ENCODE measurements at regions of chr10 and their contacts with region 1.

Region 1: DNA sequence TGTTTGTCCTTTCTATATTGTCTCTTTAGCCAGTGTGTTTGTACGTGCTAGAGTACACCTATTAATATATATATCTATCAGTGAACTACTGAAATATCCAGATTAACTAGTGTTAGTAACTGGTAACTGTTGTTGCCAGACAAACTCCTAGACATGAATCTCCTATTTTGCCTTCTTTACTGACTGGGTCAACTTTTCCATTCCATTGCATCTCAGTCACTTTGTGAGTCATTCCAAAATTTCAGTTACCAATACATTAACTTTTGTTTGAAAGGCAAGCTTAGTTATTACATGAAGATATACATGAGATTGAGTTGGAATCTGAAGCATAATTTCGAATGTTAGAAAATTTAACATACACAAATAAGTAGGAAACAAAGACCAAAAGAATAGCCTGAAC is 51.4 kb downstream of the BTAF1 start:
- DNase-seq: no peak
- H3K4me3 Mint-ChIP-seq: no peak overlapping the region
- H3K27ac Mint-ChIP-seq: peak overlapping the region; percentile 73
- H3K4me1 Mint-ChIP-seq: peaks cover 37% of the 10 kb centered on the region
- H3K27me3 Mint-ChIP-seq: no peaks in the 10 kb centered on the region

Region 2: DNA sequence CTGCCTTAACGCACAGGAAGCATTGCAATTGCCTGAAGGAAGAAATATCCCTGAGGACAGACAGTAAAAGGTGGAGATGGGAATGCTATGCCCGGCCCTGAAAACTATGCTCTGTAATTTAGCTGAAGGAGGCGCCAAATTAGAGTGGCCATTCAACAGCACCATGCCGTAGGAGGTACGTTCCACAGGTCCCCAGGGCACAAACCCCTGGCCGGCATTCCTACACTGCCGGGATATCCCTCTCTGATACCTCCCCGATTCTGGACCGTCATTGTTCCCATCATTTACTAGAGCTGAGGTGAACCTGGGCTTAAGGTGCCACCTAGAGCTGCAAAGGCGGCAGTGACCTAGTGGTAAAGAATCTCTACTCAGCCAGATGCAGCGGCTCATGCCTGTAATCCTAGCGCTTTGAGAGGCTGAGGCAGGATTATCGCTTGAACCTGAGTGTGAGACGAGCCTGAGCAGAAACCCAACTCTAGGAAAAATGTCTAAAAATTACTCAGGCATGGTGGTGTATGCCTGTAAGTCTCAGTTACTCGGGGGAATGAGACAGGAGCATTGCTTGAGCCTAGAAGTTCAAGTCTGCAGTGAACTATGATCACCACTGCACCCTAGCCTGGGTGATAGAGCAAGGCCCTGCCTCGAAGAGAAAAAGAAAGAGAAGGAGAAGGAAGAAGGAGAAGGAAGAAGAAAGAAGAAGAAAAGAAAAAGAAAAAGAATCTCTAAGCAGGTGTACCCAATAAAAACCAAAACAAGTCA is 229.7 kb before region 1 on chr10:
- CTCF ChIA-PET with region 1: no interaction called
- intact Hi-C with region 1: no loop called
- DNase-seq: peak; percentile 7
- H3K4me3 Mint-ChIP-seq: no peak overlapping the region
- H3K27ac Mint-ChIP-seq: no peak overlapping the region
- H3K4me1 Mint-ChIP-seq: no peaks in the 10 kb centered on the region
- H3K27me3 Mint-ChIP-seq: peaks cover 26% of the 10 kb centered on the region

Region 3: DNA sequence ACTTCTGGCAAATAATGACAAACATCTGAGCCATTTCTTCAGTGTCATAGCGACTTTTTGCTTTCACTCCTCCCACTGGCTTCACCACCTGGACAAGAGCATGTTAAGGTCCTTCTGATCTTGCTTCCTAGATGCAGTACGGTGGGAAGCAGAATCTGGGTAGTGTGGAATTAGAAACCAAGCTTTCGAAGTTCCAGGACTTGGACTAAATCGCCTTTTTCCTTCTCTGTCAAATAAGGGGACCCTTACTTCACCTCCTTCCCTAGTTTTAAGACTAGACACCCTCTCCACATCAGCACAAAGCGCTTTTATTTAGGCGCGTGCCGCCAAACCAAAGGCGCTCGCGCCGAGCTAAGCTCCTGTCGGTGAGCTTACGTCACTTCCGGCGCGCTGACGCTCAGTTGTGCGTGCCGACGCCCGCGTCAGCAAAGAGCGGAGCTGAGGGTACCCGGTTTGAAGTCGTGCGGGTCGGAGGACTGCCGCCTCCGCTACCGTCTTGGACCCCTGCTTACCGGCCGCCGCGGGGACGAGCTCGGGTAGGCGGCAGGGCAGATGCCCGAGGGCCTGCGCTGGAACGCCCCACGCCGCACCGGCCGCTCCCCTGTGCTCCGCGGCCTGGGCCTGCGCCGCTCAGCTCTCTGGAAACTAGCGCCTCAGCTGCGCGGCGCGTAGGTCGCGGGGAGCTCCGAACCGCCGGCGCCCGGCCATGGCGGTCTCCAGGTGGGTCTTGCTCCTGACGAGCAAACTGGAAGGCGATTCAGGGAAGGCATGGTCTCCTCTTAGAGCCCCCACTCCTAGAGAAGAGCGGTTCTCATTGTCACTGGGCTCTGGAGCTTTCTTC is 51.4 kb before region 1 on chr10 and contains the start of gene BTAF1:
- CTCF ChIA-PET with region 1: no interaction called
- intact Hi-C with region 1: loop called (anchors 1 kb)
- DNase-seq: peak; percentile 93
- H3K4me3 Mint-ChIP-seq: peak within 1 kb of the TSS; percentile 86
- H3K27ac Mint-ChIP-seq: peak within 1 kb of the TSS; percentile 99
- H3K4me1 Mint-ChIP-seq: peaks cover 35% of the 10 kb centered on the region
- H3K27me3 Mint-ChIP-seq: no peaks in the 10 kb centered on the region
- total RNA-seq, gene BTAF1: 42.6 to 43.6 TPM

Region 4: GRCh38 chr10:91953600-91954160 is 21.3 kb before region 1 on chr10:
- CTCF ChIA-PET with region 1: no interaction called
- intact Hi-C with region 1: no loop called
- DNase-seq: no peak
- H3K4me3 Mint-ChIP-seq: no peak overlapping the region
- H3K27ac Mint-ChIP-seq: no peak overlapping the region
- H3K4me1 Mint-ChIP-seq: no peaks in the 10 kb centered on the region
- H3K27me3 Mint-ChIP-seq: no peaks in the 10 kb centered on the region

Region 5: GRCh38 chr10:92011560-92012214 is 36.7 kb after region 1 on chr10:
- CTCF ChIA-PET with region 1: no interaction called
- intact Hi-C with region 1: loop called (anchors 2 kb)
- DNase-seq: no peak
- H3K4me3 Mint-ChIP-seq: no peak overlapping the region
- H3K27ac Mint-ChIP-seq: no peak overlapping the region
- H3K4me1 Mint-ChIP-seq: peaks cover 8% of the 10 kb centered on the region
- H3K27me3 Mint-ChIP-seq: no peaks in the 10 kb centered on the region